Vagina (tissue), 2 donors: ENCODE measurements at regions of chr7 and their contacts with region 1.

Region 1: DNA sequence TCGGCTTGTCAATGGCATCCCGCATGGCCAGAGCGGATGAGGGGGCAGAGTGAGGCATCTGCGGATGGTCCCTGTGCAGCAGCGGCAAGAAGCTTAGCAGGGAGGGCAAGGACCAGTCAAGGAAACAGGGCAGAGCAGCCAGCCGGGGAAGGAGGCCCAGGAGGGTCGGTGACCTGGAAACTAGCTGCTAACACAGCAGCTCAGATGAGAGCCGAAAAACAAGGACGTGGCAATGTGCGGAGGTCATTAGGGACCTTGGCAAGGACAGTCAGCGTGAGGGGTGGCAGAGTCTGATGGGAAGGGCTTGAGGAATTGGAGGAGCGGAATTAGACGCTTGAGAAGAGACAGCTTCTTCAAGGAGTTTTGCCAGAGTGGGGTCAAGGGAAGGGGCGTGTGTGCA is 20.1 kb upstream of the SH2B2 start:
- DNase-seq: no peak
- H3K4me3 ChIP-seq: no peak overlapping the region
- H3K27ac ChIP-seq: no peak overlapping the region
- H3K4me1 ChIP-seq: no peaks in the 10 kb centered on the region
- H3K27me3 ChIP-seq: no peaks in the 10 kb centered on the region
- CTCF ChIP-seq: no peak
- POLR2A ChIP-seq: no peak

Region 2: DNA sequence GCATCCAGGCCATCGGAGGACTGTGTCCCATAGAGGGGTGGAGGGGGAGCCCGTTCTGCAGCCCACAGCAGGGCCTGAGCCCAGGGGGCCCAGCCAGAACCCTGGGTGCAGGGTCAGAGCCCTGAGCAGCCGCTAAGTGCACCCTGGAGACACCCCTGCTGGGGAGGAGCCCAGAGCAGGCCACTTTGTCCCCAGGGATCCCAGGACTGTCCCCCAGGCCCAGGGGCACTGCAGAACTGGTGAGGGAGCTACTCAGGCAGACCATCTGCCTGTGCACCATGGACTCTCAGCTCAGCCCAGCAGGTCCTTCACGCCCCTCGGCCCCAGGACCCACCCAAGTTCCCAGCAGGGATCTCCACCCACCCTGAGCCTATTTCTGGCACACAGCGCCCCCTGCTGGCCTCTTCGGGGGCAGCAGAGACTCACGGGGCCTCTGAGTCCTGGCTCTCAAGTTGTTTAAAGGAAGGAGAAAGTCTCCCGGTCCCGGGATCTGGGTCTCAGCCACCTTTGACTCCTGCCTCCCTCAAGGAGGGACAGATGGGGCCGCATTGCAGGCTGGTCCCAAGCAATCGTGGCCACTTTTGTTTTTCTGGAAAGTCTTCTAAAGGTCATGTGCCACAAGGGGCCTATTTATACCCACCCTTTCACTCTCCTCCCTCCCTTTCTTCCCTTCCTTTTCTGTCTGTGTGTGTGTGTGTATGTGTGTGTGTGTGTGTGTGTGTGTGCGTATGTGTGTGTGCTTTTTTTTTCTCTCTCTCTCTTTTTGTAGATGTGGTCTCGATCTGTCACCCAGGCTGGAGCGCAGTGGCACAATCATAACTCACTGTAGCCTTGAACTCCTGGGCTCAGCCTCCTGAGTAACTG is 727.7 kb before region 1 on chr7:
- intact Hi-C with region 1: loop called (anchors 2 kb)
- DNase-seq: no peak
- H3K4me3 ChIP-seq: no peak overlapping the region
- H3K27ac ChIP-seq: no peak overlapping the region
- H3K4me1 ChIP-seq: no peaks in the 10 kb centered on the region
- H3K27me3 ChIP-seq: no peaks in the 10 kb centered on the region
- CTCF ChIP-seq: peak; percentile 69 to 82 (median 81)
- POLR2A ChIP-seq: no peak

Region 3: GRCh38 chr7:102008535-102009345 is 257.8 kb before region 1 on chr7:
- intact Hi-C with region 1: no loop called
- DNase-seq: no peak
- H3K4me3 ChIP-seq: no peak overlapping the region
- H3K27ac ChIP-seq: no peak overlapping the region
- H3K4me1 ChIP-seq: peaks cover 23% of the 10 kb centered on the region
- H3K27me3 ChIP-seq: no peaks in the 10 kb centered on the region
- CTCF ChIP-seq: no peak
- POLR2A ChIP-seq: no peak

Region 4: GRCh38 chr7:102024769-102025391 is 241.7 kb before region 1 on chr7:
- intact Hi-C with region 1: no loop called
- DNase-seq: no peak
- H3K4me3 ChIP-seq: no peak overlapping the region
- H3K27ac ChIP-seq: no peak overlapping the region
- H3K4me1 ChIP-seq: no peaks in the 10 kb centered on the region
- H3K27me3 ChIP-seq: no peaks in the 10 kb centered on the region
- CTCF ChIP-seq: no peak
- POLR2A ChIP-seq: no peak

Region 5: GRCh38 chr7:102061981-102062390 is 204.6 kb before region 1 on chr7:
- intact Hi-C with region 1: no loop called
- DNase-seq: no peak
- H3K4me3 ChIP-seq: no peak overlapping the region
- H3K27ac ChIP-seq: no peak overlapping the region
- H3K4me1 ChIP-seq: peaks cover 19% of the 10 kb centered on the region
- H3K27me3 ChIP-seq: no peaks in the 10 kb centered on the region
- CTCF ChIP-seq: no peak
- POLR2A ChIP-seq: no peak

Region 6: DNA sequence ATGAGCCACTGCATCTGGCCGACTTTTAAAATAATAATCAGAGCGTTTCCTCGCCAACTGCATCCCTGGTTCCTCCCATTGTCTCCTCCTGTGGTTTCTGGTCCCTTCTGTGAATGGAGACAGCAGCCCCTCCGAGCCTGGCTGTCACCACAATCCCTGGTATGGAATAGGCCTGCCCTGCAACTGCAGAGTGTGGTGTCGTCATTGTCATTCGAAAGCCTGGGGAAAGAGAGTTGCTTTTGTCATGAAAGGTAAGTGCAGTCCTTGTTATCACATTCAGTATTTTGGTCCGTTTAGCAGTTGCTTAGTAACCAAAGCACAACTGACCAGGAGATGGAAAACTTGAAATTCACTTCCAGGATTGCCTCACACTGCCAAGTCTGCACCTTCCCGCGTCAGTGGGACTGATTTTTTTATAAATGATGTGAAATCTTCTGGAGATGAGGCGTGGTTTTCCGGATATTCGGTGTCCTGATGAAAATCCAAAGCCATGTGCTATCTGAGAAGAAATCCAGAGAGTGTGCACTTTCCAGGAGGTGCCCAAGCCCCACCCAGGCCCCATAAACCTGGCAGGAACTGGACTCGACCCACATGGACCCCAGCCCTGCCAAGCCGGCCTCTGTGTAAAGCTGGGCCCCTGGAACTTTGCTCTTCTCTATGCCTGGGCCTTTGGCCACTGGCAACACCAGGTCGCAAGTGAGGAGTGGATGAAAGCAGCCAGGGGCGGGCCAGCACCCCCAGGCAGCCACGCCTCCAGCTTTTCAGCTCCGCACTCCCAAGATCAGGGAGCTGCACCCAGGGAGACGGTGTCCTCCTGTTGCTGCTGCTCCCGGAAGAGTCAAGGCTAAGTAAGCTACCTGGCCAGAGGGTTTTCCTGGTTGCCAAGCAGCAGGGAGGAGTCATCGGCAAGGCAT is 113.6 kb before region 1 on chr7:
- intact Hi-C with region 1: no loop called
- DNase-seq: no peak
- H3K4me3 ChIP-seq: no peak overlapping the region
- H3K27ac ChIP-seq: no peak overlapping the region
- H3K4me1 ChIP-seq: peaks cover 13% of the 10 kb centered on the region
- H3K27me3 ChIP-seq: no peaks in the 10 kb centered on the region
- CTCF ChIP-seq: no peak
- POLR2A ChIP-seq: no peak